Spleen (tissue), 13 donors: ENCODE measurements at regions of chr4 and their contacts with region 1.

Region 1: DNA sequence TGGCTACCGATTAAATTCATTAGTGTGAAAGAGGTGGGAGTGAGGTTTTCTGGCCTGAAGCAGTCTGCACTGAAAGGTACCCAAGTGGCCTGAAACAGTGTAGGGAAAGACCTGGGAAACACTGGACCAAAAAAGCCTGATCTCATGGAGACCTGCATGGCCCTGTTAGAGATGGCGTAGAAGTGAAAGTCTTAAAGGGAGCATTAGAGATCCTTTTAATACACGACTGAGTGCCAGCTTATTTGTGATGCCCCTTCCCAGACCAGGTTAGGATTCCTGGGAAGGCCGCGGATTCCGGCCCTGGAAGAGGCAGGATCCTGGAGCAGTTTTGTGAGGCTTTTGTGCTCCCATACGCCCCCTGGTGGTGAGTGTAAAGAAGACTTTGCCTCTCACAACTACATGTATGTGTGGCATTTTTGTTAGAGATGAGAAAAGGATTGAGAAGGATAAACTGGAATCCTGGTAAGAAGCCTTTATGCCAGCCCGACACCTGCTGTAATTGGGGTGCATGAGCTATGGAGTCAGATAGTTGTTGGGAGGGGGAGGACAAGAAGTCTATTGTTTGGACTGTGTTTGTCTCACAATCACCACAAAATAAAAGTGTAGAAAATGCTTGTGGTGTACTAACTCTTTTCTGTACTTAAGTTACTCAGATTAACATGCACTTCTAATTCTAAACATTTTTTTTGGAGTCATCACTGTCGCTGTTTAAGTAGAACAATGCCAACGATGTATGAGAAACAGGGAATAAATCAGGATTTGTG is 54.0 kb downstream of the JADE1 start:
- DNase-seq: peak; percentile 79
- H3K4me3 ChIP-seq: peak overlapping the region in 1 of 8 donors; percentile 25
- H3K27ac ChIP-seq: peak overlapping the region in 6 of 8 donors; percentile 48 to 84 (median 76)
- H3K4me1 ChIP-seq: peaks cover 18 to 50% (median 28%) of the 10 kb centered on the region in 6 donors
- H3K27me3 ChIP-seq: no peaks in the 10 kb centered on the region
- CTCF ChIP-seq: peak; percentile 51 to 89 (median 80)
- POLR2A ChIP-seq: no peak

Region 2: GRCh38 chr4:128191115-128191781 is 672.2 kb before region 1 on chr4:
- intact Hi-C with region 1: loop called (anchors 10 kb)
- DNase-seq: peak; percentile 75
- H3K4me3 ChIP-seq: no peak overlapping the region
- H3K27ac ChIP-seq: no peak overlapping the region
- H3K4me1 ChIP-seq: peaks cover 0 to 8% (median 0%) of the 10 kb centered on the region in 6 donors
- H3K27me3 ChIP-seq: no peaks in the 10 kb centered on the region
- CTCF ChIP-seq: peak; percentile 57 to 87 (median 81)
- POLR2A ChIP-seq: no peak

Region 3: GRCh38 chr4:128454281-128455075 is 409.0 kb before region 1 on chr4:
- intact Hi-C with region 1: loop called (anchors 10 kb)
- DNase-seq: peak; percentile 84
- H3K4me3 ChIP-seq: no peak overlapping the region
- H3K27ac ChIP-seq: peak overlapping the region in 2 of 8 donors; percentile 33 to 52
- H3K4me1 ChIP-seq: peaks cover 0 to 17% (median 8%) of the 10 kb centered on the region in 6 donors
- H3K27me3 ChIP-seq: no peaks in the 10 kb centered on the region
- CTCF ChIP-seq: peak; percentile 47 to 80 (median 70)
- POLR2A ChIP-seq: no peak